HAP-1 (cell line): ENCODE measurements at regions of chr6 and their contacts with region 1.

Region 1: DNA sequence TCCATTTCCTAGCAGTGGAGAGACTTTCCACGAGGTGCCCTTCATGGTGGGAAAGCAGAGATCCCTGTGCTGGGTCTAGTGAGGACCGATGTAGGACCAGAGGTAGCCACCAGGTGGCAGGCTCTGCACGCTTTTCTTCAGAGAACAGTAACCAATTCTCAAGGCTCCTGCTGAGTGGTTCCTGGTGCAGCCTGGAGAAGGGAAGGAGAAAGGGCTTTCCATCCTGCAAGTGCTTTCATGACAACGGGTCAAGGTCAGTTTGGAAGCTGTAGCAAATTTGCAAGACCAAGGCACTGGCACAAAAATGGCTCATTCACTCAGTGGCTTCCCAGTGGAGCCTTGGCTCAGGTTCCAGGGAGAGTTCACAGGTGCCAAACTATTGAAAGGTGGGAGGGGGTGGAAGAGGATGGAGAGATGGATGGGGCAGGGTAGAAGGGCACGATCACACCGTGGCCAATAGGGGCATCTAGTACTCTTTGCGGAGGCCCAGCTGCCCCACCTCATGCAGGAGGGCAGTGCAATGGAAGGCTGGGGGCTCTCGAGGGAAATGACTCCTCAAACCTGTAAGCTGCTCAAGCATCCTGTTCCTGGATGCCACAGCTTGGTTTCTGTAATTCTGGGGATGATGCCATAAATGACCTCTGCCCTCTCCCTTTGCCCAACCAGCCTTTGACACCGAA is 25.5 kb upstream of the KCNK16 start:
- DNase-seq: peak; percentile 56 to 76
- H3K4me3 ChIP-seq: no peak overlapping the region
- H3K4me1 ChIP-seq: no peaks in the 10 kb centered on the region
- H3K27me3 ChIP-seq: no peaks in the 10 kb centered on the region

Region 2: DNA sequence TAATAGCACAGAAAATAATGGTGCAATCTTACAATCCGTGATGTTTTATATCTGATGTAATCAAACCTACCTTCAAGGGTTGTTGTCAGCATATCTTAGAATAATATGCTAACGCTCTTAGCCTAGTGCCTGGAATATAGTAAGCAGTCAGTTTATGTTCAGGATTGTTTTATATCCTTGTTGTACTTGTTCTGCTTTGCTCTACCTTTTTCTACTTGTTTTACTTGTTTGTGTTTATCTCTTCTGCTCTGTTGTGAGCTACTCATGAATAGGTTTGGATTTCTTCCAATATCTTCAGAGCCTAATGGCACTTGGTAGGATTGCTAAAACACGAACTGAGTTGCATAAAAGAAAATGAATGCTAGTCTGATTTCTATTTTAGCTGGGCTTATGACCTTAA is 592.9 kb before region 1 on chr6:
- in situ Hi-C with region 1: no loop called
- DNase-seq: no peak
- H3K4me3 ChIP-seq: no peak overlapping the region
- H3K4me1 ChIP-seq: no peaks in the 10 kb centered on the region
- H3K27me3 ChIP-seq: no peaks in the 10 kb centered on the region; the same call in 1 of the 2 replicates

Region 3: DNA sequence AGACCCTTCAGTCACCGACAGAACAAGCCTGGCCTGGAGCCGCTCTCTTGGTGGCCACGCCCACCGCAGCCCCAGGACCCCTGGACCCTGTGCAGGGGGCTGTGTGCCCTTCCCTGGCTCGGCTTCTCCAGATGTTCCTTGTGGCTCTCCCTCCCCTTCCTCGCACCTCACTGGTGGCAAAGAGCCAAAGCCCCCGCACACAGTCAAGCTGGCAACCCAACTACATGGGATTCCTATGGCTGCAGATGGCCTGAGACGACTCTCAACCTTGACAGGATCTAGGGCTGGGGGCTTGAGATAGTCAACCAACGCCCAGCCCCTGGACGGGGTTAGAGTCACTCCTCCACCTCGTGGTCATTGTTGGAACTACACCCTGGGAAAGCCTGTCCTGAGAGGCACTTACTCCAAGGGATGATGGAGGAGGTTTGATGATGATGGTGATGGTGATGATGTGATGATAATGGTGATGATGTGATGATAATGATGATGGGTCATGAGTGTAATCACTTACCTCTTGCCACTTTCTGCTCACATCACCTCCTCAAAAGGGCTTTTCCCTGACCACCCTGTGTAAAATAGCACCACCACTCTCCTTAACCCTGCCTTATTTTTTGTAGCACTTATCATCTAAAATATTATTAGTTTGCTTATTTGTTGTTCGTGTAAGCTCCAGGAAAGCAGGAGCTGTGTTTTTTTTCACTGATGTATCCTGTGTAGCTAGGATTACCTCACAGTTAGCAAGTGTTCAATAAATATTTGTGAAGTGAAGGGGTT is 960.7 kb after region 1 on chr6:
- in situ Hi-C with region 1: loop called (anchors 10 kb)
- DNase-seq: peak in 1 of 2 experiments; percentile 80
- H3K4me3 ChIP-seq: no peak overlapping the region
- H3K4me1 ChIP-seq: no peaks in the 10 kb centered on the region
- H3K27me3 ChIP-seq: no peaks in the 10 kb centered on the region

Region 4: GRCh38 chr6:40874495-40874894 is 1526.4 kb after region 1 on chr6:
- in situ Hi-C with region 1: no loop called
- DNase-seq: no peak
- H3K4me3 ChIP-seq: no peak overlapping the region
- H3K4me1 ChIP-seq: no peaks in the 10 kb centered on the region
- H3K27me3 ChIP-seq: no peaks in the 10 kb centered on the region

Region 5: GRCh38 chr6:41027799-41028628 is 1680.0 kb after region 1 on chr6:
- in situ Hi-C with region 1: loop called (anchors 25 kb)
- DNase-seq: peak; percentile 82 to 87
- H3K4me3 ChIP-seq: peak overlapping the region; percentile 43
- H3K4me1 ChIP-seq: peaks cover 16% of the 10 kb centered on the region
- H3K27me3 ChIP-seq: no peaks in the 10 kb centered on the region